Heart right ventricle (tissue), 16 donors: ENCODE measurements at regions of chr2 and their contacts with region 1.

Region 1: GRCh38 chr2:12709207-12709522 is 7.6 kb upstream of the TRIB2 start:
- DNase-seq: no peak
- ATAC-seq: no peak
- H3K4me3 ChIP-seq: no peak overlapping the region
- H3K27ac ChIP-seq: peak overlapping the region in 1 of 10 donors; percentile 1
- H3K4me1 ChIP-seq: peaks cover 0 to 23% (median 7%) of the 10 kb centered on the region in 9 donors
- H3K27me3 ChIP-seq: no peaks in the 10 kb centered on the region
- CTCF ChIP-seq: no peak

Region 2: GRCh38 chr2:12665334-12665733 is 43.8 kb before region 1 on chr2:
- intact Hi-C with region 1: loop called in 1 of 10 experiments (anchors 1 kb)
- DNase-seq: peak in 1 of 2 donors; percentile 42
- ATAC-seq: peak; percentile 66 to 93 (median 86)
- H3K4me3 ChIP-seq: no peak overlapping the region
- H3K27ac ChIP-seq: peak overlapping the region in 3 of 10 donors; percentile 33 to 76 (median 42)
- H3K4me1 ChIP-seq: peaks cover 0 to 34% (median 18%) of the 10 kb centered on the region in 9 donors
- H3K27me3 ChIP-seq: no peaks in the 10 kb centered on the region
- CTCF ChIP-seq: no peak